ENCODE measurements at regions of chr14 and their contacts with region 1.

Region 1: DNA sequence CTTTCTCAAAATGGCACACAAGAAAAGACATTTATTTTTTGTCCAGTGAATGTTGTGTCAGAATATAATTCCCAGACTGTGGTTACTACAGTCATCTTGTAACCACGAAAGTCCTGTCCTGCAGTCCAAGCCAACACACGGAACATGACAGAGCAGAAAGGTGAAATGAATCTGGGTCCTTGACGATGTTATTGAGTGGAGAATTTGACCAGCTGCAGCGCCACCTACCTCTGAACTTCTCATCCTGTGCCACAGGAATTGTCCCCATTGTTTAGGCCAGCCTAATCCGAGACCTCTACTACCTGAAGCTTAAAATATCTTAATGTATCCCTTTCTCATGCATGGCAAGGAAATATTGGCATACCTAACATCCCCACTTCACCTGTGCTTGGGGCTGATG is 64.1 kb upstream of the OTX2 start:
- DNase-seq: peak in 1 of 2 experiments; percentile 71
- H3K4me3 ChIP-seq: no peak overlapping the region
- H3K27ac ChIP-seq: no peak overlapping the region
- H3K4me1 ChIP-seq: peaks cover 0 to 5% (median 3%) of the 10 kb centered on the region in 4 experiments; a peak in 3 of 7 replicates
- H3K27me3 ChIP-seq: peaks cover 0 to 2% (median 0%) of the 10 kb centered on the region in 4 experiments; a peak in 2 of 7 replicates
- CTCF ChIP-seq: peak; percentile 66 to 88 (median 73)
- EP300 ChIP-seq: no peak
- POLR2A ChIP-seq: no peak
- RAD21 ChIP-seq: peak; percentile 80 to 83

Region 2: GRCh38 chr14:56858422-56858821 is 16.0 kb before region 1 on chr14:
- CTCF ChIA-PET with region 1: interaction called, 14 read pairs
- POLR2A ChIA-PET with region 1: interaction called, 3 read pairs
- DNase-seq: no peak
- H3K4me3 ChIP-seq: no peak overlapping the region
- H3K27ac ChIP-seq: no peak overlapping the region
- H3K4me1 ChIP-seq: peaks cover 0 to 24% (median 22%) of the 10 kb centered on the region in 4 experiments; a peak in 5 of 7 replicates
- H3K27me3 ChIP-seq: no peaks in the 10 kb centered on the region
- CTCF ChIP-seq: no peak
- EP300 ChIP-seq: no peak
- POLR2A ChIP-seq: no peak
- RAD21 ChIP-seq: no peak

Region 3: DNA sequence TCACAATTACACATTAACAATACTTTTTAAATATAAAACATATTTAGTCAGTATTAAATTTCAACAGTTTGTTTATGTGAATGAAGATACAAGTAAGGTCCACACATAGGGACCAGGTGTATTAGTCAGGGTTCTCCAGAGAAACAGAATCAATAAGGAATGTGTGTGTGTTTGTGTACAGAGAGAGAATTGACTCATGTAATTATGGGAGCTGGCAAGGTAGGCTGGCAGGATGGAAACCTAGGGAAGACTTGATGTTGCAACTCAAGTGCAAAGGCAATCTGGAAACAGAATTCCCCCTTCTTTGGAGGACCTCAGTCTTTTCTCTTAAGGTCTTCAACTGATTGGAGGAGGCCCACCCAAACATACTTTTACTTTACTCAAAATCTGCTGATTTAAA is 59.1 kb after region 1 on chr14:
- CTCF ChIA-PET with region 1: no interaction called
- POLR2A ChIA-PET with region 1: no interaction called
- DNase-seq: no peak
- H3K4me3 ChIP-seq: no peak overlapping the region
- H3K27ac ChIP-seq: no peak overlapping the region
- H3K4me1 ChIP-seq: no peaks in the 10 kb centered on the region
- H3K27me3 ChIP-seq: no peaks in the 10 kb centered on the region; a peak in 1 of 7 replicates
- CTCF ChIP-seq: no peak
- EP300 ChIP-seq: no peak
- POLR2A ChIP-seq: no peak
- RAD21 ChIP-seq: no peak